ENCODE measurements at regions of chr7 and their contacts with region 1.

Region 1: DNA sequence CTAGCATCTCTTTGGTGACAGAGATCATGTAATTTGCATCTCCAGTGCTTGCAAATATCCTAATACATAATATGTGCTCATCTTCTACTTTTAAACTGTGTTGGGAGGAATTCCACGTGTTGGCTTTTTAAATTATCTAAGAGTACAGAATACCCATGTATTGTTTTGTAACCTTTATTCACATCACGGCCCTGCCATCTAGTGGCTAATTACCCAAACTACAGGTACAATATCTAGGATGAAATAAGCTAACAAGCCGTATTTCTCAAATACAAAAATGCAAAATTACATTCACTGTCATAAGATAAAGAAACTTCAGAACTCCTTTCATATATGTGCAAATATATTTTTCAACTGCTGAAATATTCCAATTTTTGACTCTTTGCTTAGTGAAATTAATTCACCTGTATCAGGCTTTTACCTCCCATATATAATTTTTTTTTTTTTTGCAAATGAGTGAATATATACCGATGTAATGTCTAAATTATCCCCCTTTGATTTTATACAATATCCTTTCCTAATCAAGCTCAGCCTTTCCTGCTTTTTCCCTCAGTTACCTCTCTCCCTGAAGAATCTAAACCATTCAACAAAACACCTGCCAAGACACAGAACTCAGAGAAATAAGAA is 30.3 kb upstream of the LSM8 start:
- DNase-seq: peak; percentile 47
- H3K4me3 ChIP-seq: no peak overlapping the region
- H3K27ac ChIP-seq: no peak overlapping the region
- H3K4me1 ChIP-seq: no peaks in the 10 kb centered on the region
- CTCF ChIP-seq: peak; percentile 91

Region 2: GRCh38 chr7:117458977-117459583 is 694.6 kb before region 1 on chr7:
- CTCF ChIA-PET with region 1: interaction called, 3 read pairs
- POLR2A ChIA-PET with region 1: no interaction called
- intact Hi-C with region 1: loop called (anchors 5 kb)
- DNase-seq: peak; percentile 28
- H3K4me3 ChIP-seq: no peak overlapping the region
- H3K27ac ChIP-seq: no peak overlapping the region
- H3K4me1 ChIP-seq: no peaks in the 10 kb centered on the region
- CTCF ChIP-seq: peak; percentile 81

Region 3: GRCh38 chr7:117750612-117751563 is 402.8 kb before region 1 on chr7:
- CTCF ChIA-PET with region 1: no interaction called
- POLR2A ChIA-PET with region 1: no interaction called
- intact Hi-C with region 1: loop called (anchors 10 kb)
- DNase-seq: peak; percentile 6
- H3K4me3 ChIP-seq: no peak overlapping the region
- H3K27ac ChIP-seq: no peak overlapping the region
- H3K4me1 ChIP-seq: no peaks in the 10 kb centered on the region
- CTCF ChIP-seq: peak; percentile 74

Region 4: DNA sequence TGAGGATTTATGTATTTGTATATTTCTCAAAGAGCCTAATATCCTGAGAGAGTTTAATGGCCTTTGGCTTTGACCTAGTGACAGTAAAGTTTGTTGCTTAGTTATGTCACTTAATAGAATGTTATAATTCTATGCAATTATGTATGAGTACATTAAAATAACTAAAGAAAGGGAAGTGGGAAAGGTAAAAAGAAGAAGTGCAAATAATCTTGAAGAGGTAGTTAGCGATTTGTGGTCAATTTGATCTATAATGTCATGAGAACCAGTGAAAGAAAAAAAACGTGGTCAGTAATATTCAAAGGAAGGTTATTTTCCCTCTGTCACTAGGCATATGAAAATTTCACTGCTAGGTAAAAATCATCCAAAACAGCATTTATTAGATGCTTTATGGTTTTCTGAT is 113.1 kb before region 1 on chr7:
- CTCF ChIA-PET with region 1: no interaction called
- POLR2A ChIA-PET with region 1: no interaction called
- intact Hi-C with region 1: no loop called
- DNase-seq: no peak
- H3K4me3 ChIP-seq: no peak overlapping the region
- H3K27ac ChIP-seq: no peak overlapping the region
- H3K4me1 ChIP-seq: no peaks in the 10 kb centered on the region
- CTCF ChIP-seq: no peak

Region 5: DNA sequence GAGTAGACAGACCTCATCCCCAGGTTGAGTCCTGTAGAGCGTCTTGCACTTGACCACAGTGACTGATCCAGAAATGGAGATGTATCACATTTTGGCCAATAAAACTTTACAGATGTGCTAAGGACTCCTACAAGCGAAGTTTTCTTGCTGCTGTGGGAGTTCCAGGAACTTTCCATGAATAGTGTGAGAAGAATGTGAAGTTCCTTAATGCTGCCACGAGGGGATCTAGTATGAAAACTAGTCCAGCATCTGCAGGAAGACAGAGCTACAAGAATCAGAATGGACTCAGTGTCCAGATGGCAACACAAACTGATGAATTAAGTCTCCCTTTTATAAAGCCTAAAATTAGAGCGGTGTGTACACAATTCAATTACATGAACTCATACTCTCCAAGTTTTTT is 15.5 kb after region 1 on chr7:
- CTCF ChIA-PET with region 1: no interaction called
- POLR2A ChIA-PET with region 1: no interaction called
- intact Hi-C with region 1: no loop called
- DNase-seq: no peak
- H3K4me3 ChIP-seq: no peak overlapping the region
- H3K27ac ChIP-seq: no peak overlapping the region
- H3K4me1 ChIP-seq: no peaks in the 10 kb centered on the region
- CTCF ChIP-seq: 0 out of 2 replicates have a peak, but pooled peaks have one; percentile 18